Lower leg skin (tissue), 4 donors: ENCODE measurements at regions of chr16 and their contacts with region 1.

Region 1: DNA sequence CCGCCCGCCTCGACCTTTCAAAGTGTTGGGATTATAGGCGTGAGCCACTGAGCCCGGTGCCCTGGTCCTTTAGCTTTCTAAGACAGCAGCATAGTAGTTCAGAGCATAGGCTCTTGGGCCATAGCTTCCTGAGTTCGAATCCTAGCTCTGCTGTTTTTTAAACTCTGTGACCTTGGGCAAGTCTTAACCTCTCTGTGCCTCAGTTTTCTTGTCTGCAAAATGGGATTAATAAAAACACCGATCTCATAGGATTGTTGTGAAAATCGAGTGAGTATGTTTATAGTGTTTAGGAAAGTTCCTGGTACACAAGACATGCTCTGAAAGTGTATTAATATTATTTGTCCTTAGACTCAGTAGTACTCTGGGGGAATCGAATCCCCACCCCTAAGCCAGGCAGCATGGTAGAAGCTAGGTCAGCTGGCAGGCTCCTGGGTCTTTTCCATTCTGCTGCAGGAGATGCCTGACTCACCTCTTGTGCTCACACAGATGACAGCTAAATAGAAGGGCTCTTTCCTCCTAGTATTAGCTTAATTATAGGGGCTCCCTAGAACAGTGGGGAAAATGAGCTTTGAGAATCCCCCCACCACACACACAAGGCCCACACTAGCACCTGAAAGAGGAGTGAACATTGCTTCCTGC is 44.1 kb downstream of the PRKCB start:
- DNase-seq: no peak
- H3K4me3 ChIP-seq: no peak overlapping the region
- CTCF ChIP-seq: no peak
- POLR2A ChIP-seq: no peak

Region 2: GRCh38 chr16:23504451-23505179 is 375.2 kb before region 1 on chr16:
- intact Hi-C with region 1: no loop called
- DNase-seq: peak; percentile 65 to 91
- H3K4me3 ChIP-seq: no peak overlapping the region
- CTCF ChIP-seq: no peak
- POLR2A ChIP-seq: no peak

Region 3: GRCh38 chr16:24140730-24141129 is 260.9 kb after region 1 on chr16:
- intact Hi-C with region 1: loop called (anchors 5 kb)
- DNase-seq: no peak
- H3K4me3 ChIP-seq: no peak overlapping the region
- CTCF ChIP-seq: no peak
- POLR2A ChIP-seq: no peak